GM10248 (cell line): ENCODE measurements at regions of chr20 and their contacts with region 1.

Region 1: DNA sequence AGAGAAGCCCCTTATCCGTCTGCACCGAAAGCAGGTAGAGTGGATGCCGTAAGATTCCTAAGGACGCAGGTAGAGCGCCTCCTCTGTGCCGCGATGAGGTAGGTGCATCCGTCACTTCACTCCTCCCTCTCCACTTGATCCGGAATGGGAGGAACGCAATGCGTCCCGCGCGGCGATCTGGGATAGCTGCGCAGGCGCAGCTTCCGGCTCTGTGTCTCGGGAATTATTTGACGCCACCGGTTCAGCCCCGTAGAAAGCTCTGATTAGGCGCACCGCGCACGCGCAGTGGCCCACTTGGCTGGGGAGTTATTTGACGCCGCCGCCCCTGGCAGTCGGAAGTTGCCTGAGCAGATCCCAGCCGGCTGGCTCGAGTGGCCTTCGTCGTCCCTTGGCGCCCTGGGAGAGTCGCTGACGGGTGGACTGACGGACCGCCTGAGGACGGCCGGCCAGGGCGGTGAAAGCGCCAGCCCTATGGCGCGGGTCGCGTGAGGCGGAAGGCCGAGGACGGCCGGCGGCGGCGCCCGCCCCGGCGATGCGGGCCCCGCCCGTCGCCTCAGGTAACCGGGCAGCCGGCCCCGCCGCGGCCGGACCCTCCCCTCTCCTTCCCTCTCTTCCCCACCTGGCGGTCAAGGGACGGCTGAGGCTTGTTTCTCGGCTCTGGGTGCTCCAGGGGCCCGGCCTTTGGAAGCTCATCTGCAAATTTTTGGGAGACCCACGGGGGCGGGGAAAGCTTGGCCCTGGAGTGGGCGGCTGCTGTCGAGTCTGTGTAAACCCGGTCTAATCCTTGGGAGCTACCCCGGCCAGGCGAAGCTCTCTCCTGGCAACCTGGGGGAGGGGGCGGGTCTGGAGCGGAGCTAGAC is at the start of gene RALGAPB:
- DNase-seq: peak; percentile 97
- CTCF ChIP-seq: peak; percentile 37

Region 2: DNA sequence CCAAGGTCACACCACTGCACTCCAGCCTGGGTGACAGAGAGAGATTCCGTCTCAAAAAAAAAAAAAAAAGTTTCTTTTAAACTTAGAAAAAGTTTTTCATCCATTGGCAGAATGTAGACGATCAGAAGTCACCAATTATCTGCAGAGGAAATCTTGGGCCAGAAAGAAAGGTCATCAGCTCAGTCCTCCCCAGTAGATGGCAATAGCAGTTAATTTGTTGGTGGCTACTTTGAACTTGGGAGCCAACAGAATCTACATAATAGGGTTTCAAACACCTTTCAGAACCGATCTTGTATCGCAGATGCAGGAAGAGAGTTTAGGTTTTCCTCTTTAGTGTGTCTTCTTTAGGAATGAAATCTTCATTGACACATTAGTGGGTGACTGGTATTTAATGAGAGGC is 84.8 kb before region 1 on chr20:
- CTCF ChIA-PET with region 1: no interaction called
- POLR2A ChIA-PET with region 1: no interaction called
- DNase-seq: no peak
- CTCF ChIP-seq: no peak

Region 3: DNA sequence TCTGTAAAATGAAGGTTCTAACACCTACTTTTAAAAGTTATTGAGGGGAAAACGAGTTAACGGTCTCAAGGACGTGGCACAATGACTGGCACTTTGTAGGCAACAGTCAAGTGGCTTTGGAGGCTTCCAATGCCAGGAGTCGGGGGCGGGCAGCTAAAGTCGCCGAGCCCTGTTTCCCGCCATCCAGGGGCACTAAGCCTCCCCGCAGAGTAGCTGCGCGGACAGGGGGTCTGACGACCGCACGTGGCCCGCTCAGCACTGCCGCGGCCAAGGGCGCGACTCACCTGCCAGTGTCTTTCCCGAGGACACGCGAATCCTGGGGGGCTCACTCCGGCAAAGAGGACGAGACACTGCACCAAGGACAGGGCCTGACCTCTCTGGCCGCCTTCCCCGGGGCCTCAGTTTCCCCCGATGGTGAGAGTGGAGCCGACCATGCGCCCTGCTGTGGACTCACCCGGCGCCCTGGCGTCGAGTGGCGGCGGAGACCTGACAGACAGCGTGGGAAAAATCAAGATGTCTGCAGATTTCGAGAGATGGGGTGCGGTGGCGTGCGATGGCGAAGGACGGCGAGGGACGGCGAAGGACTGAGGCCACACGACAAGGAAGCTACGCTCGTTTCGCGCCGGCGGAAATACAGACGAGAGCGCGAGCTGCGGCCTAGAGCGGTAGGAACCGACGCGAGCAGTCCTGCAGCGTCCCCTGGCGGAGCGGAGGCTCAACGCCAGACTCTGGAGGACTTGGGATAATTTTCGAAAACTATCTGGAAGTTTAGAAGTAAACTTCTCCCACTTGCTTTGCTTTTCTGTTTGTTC is 37.8 kb before region 1 on chr20 and contains the start of gene SNHG17:
- CTCF ChIA-PET with region 1: interaction called, 29 read pairs
- POLR2A ChIA-PET with region 1: interaction called, 4 read pairs
- DNase-seq: peak; percentile 92
- CTCF ChIP-seq: peak; percentile 99

Region 4: DNA sequence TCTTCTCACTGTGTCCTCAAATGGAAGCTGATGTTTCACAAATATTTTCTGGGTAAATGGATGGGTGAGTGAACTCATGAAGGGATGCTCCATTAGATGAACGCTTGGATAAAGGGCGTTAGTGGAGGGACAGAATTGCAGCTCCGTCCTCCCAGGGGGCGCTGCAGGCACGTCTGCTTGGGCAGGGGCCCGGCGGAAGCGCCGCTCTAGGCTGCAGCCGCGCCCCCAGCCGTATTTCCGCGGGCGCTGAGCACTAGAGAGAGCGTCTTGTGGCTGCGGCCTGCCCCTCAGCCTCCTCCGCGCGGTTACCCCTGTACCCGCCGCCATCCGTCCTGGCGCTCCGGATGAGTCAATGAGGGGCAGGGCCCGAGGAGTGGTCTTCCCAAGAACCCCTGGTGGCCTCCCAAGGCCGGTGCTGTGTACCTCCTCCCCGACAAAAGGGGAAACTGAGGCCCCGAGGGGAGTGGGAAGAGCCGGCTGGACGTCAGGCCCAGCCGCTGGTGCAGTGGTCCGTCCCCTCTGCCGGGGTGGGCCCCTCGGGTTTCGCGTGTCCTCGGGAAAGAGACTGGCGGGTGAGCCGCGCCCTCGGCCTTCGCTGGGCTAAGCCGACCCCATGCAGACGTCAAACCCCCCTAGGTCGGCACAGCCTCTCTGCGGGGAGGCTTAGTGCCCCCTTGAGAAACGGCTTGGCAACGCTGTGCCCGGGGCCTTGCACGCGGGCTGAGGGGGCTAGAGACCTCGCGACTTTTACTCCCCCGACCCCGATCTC is 26.1 kb before region 1 on chr20:
- CTCF ChIA-PET with region 1: interaction called, 60 read pairs
- POLR2A ChIA-PET with region 1: no interaction called
- DNase-seq: peak; percentile 92
- CTCF ChIP-seq: peak; percentile 96

Region 5: DNA sequence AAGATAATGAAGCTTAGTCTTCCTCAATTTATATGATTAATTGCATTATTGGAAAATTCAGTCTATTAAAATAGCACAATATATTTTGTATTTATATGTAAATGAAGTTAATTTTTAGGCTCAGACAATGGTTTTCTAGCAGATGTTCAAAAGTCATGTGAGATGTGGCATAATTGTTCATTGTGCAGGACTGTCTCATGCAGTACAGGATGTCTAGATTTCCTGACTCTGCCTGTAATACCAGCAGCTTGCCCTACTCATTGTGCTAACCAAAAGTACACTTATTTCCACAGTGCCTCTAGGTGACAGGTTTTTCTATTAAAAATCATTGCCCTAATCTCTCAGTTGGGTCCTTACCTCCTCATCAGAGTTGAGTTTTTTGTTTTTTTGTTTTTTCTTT is 12.3 kb after region 1 on chr20:
- CTCF ChIA-PET with region 1: interaction called, 15 read pairs
- POLR2A ChIA-PET with region 1: interaction called, 5 read pairs
- DNase-seq: no peak
- CTCF ChIP-seq: no peak